Left ventricle myocardium inferior (tissue), 1 donor: ENCODE measurements at regions of chr12 and their contacts with region 1.

Region 1: GRCh38 chr12:39772708-39773665 is 153.4 kb upstream of the ABCD2 start:
- DNase-seq: no peak
- H3K4me3 ChIP-seq: no peak overlapping the region
- H3K27ac ChIP-seq: no peak overlapping the region
- H3K4me1 ChIP-seq: no peaks in the 10 kb centered on the region
- H3K27me3 ChIP-seq: no peaks in the 10 kb centered on the region
- CTCF ChIP-seq: no peak

Region 2: DNA sequence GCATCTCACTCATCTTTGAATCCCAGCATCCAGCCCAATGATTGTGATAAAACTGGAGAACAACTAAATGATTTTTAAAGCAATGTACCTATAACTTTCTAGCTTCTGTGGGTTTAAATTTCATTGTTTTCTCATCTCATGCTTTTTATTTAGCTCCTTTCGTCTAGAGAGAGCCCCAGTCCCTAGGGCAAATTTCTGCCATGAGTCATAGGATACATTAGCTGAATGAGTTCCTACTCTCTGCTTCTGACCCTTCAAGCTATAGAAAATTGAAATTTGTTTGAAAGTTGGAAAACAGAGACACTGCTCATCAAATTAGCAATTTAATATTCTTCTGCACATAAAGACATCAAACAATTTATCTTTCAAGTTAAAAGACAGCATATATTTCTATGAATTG is 444.0 kb before region 1 on chr12:
- intact Hi-C with region 1: no loop called
- DNase-seq: no peak
- H3K4me3 ChIP-seq: no peak overlapping the region
- H3K27ac ChIP-seq: no peak overlapping the region
- H3K4me1 ChIP-seq: peaks cover 27% of the 10 kb centered on the region
- H3K27me3 ChIP-seq: no peaks in the 10 kb centered on the region
- CTCF ChIP-seq: no peak

Region 3: DNA sequence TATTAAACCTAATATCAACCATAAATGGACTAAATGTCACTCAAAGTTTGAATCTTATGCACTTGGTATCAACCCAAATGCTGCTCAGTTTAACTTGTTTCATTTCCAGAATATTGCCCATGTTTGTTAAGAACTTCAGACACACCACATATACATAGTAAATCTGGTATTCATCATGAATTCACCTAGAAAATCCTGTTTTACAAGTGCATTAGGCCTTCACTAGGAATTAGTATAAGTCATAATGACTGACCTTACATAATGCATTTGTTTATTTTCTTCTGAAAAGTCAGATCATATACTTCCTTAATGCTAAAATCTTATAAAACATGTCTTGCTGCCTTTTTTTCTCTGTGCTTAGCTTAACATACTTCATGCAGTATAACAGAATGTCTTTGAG is 219.5 kb before region 1 on chr12:
- intact Hi-C with region 1: no loop called
- DNase-seq: no peak
- H3K4me3 ChIP-seq: no peak overlapping the region
- H3K27ac ChIP-seq: no peak overlapping the region
- H3K4me1 ChIP-seq: no peaks in the 10 kb centered on the region
- H3K27me3 ChIP-seq: no peaks in the 10 kb centered on the region
- CTCF ChIP-seq: no peak

Region 4: GRCh38 chr12:39697129-39697528 is 75.9 kb before region 1 on chr12:
- intact Hi-C with region 1: no loop called
- DNase-seq: no peak
- H3K4me3 ChIP-seq: no peak overlapping the region
- H3K27ac ChIP-seq: no peak overlapping the region
- H3K4me1 ChIP-seq: no peaks in the 10 kb centered on the region
- H3K27me3 ChIP-seq: no peaks in the 10 kb centered on the region
- CTCF ChIP-seq: no peak

Region 5: DNA sequence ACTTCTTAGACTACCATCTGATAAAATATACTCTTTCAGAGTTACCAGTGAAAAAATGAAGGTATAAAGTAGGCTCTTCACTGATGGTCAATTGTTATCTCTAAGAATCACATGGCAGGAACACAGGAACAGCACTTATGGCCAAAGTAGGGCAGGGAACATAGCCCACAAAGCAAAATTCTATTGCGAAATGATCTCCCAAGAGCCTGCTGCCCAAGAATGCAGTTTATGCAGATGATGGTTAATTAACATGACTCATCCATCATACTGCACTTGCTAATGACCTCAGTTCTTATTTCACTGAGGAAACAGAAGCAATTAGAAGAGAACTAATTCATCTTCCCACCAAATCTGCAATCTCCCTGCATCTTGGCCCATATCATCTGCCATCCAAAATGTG is 199.1 kb after region 1 on chr12:
- intact Hi-C with region 1: loop called (anchors 10 kb)
- DNase-seq: no peak
- H3K4me3 ChIP-seq: no peak overlapping the region
- H3K27ac ChIP-seq: no peak overlapping the region
- H3K4me1 ChIP-seq: no peaks in the 10 kb centered on the region
- H3K27me3 ChIP-seq: no peaks in the 10 kb centered on the region
- CTCF ChIP-seq: no peak